Activated naive CD4-positive, alpha-beta T cell treated with anti-CD3 and anti-CD28 coated beads for 36 hours (primary cell): ENCODE measurements at regions of chr12 and their contacts with region 1.

Region 1: GRCh38 chr12:1594261-1595025 is at the start of gene FBXL14:
- DNase-seq: peak; percentile 88
- H3K4me3 Mint-ChIP-seq: peak within 1 kb of the TSS; percentile 94
- H3K27ac Mint-ChIP-seq: peak within 1 kb of the TSS; percentile 88
- H3K4me1 Mint-ChIP-seq: peaks cover 39% of the 10 kb centered on the region
- H3K27me3 Mint-ChIP-seq: no peaks in the 10 kb centered on the region
- total RNA-seq, gene FBXL14: 11.4 to 11.9 TPM

Region 2: DNA sequence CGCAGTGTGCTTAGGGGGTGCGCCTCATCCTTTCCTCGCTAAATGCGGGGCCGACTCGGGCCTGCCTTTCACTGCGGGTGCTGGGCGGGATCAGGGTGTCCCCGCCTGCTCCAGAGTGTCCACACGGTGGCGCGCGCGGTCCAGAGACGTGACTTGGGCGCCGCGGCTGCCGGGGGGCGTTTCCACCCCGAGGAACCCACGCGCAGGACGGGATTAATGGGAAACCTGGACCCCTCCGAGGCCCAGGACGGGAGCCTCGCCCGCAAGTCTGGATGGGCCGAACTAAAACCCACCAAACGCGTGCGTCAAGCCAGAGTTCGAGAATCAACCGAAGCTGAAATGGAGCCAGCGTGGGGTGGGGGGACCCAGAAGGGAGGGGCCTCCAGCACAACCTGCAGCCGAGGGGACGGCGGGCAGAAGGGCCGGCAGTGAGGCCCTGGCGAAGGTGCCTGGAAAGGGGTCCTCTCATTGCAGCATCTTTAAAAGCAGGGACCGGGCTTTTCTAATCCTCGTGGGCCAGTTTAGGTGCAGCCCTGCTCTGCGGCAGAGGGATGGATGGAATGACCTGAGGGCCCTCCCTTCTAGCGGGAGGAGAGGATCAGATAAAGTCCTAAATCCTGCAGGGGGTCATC is 1024.5 kb before region 1 on chr12:
- CTCF ChIA-PET with region 1: no interaction called
- intact Hi-C with region 1: loop called (anchors 5 kb)
- DNase-seq: peak; percentile 91
- H3K4me3 Mint-ChIP-seq: peak overlapping the region; percentile 80
- H3K27ac Mint-ChIP-seq: no peak overlapping the region
- H3K4me1 Mint-ChIP-seq: peaks cover 58% of the 10 kb centered on the region
- H3K27me3 Mint-ChIP-seq: no peaks in the 10 kb centered on the region

Region 3: DNA sequence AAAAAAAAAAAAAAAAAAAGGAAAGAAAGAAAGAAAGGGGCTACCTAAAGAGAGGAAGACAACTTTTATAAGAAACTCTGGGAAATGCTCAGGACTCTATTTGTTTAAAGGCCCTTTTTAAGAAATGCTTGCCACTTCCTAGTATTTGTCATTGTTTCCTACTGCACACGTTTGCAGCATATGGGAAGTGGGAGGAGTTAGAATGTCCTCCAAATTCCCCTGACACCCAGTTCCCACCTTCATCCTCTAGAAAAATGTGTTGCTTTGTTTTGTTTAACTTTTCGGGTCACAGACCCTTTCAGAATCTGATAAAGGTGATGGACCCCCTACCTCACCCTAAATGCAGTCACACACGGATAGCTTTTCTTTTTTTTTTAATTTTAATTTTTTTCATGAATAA is 972.0 kb before region 1 on chr12:
- CTCF ChIA-PET with region 1: no interaction called
- intact Hi-C with region 1: loop called (anchors 5 kb)
- DNase-seq: peak; percentile 57
- H3K4me3 Mint-ChIP-seq: peak overlapping the region; percentile 10
- H3K27ac Mint-ChIP-seq: peak overlapping the region; percentile 81
- H3K4me1 Mint-ChIP-seq: peaks cover 43% of the 10 kb centered on the region
- H3K27me3 Mint-ChIP-seq: no peaks in the 10 kb centered on the region

Region 4: DNA sequence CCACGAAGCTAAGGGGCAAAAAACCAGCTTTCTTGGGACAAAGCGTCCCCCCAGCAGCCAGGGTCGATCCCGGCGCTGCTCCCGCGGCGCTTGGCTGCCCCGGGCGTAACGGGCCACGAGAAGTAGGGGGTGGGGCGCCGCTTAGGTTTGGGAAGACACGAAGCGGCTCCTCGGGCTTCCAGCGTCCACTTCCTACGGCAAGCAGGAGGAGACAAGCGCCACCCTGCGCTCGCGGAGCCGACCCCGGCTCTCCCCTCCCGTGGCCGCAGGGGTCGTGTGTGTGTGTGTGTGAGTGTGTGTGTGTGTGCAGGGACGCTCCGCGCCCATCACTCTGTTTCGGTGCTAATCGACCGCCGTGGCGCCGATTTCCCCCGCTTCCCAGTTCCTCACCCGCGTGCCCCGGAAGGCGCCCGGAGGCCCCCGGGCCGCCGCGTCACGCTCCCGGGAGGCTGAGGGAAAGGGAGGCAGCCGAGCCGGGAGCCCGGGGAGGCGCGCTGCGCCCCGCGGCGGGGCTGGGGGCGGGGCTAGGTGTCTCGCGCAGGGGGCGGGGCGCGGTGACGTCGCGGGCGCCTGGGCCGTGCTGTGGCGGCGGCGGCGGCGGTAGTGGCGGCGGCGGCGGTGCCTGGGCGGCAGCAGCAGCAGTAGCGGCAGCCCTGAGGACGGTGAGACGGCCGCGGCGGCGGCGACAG is 603.6 kb before region 1 on chr12 and contains the start of gene ERC1:
- CTCF ChIA-PET with region 1: interaction called, 4 read pairs
- intact Hi-C with region 1: loop called (anchors 2 kb)
- DNase-seq: peak; percentile 83
- H3K4me3 Mint-ChIP-seq: peak within 1 kb of the TSS; percentile 86
- H3K27ac Mint-ChIP-seq: peak within 1 kb of the TSS; percentile 77
- H3K4me1 Mint-ChIP-seq: peaks cover 32% of the 10 kb centered on the region
- H3K27me3 Mint-ChIP-seq: no peaks in the 10 kb centered on the region
- total RNA-seq, gene ERC1: 17.4 to 20.7 TPM

Region 5: DNA sequence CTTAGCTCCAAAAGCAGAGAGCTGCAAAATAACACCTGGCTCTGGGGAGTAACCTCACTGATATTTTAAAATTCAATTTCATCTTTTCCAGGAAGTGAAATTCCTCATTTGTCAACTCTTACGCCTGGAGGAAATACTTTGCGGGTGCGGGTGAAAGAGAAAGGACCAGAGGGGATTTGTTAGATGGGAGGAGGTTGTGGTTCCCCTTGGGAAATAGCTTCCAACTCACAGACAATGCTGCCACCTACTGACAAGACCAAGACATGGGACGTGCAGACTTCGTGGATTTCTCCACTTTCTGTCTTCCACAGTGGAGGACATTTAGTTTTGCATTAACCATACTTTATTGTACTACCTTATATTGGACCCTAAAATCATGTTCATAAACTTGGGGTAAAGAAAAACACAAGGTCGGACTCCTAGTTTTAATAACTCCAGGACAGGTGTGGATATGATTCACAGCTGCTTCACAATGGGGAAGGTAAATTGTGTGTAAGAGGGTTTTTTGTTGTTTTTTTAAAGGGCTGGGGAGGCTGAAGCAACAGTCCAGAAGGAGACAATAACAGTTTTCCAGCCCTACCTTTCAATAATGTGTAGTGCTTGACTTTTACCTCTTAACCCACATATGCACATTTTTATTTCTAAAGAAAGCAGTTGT is 10.9 kb before region 1 on chr12:
- CTCF ChIA-PET with region 1: interaction called, 23 read pairs
- intact Hi-C with region 1: no loop called
- DNase-seq: peak; percentile 83
- H3K4me3 Mint-ChIP-seq: no peak overlapping the region
- H3K27ac Mint-ChIP-seq: no peak overlapping the region
- H3K4me1 Mint-ChIP-seq: peaks cover 19% of the 10 kb centered on the region
- H3K27me3 Mint-ChIP-seq: no peaks in the 10 kb centered on the region